Activated CD4-positive, alpha-beta T cell treated with anti-CD3 and anti-CD28 coated beads for 36 hours (primary cell): ENCODE measurements at regions of chr21 and their contacts with region 1.

Region 1: GRCh38 chr21:32727687-32728455 is at the start of gene SYNJ1:
- DNase-seq: peak; percentile 97
- ATAC-seq: peak; percentile 91
- H3K4me3 Mint-ChIP-seq: peak within 1 kb of the TSS; percentile 93
- H3K27ac Mint-ChIP-seq: peak within 1 kb of the TSS; percentile 91
- H3K4me1 Mint-ChIP-seq: peaks cover 54% of the 10 kb centered on the region
- H3K27me3 Mint-ChIP-seq: no peaks in the 10 kb centered on the region
- total RNA-seq, gene SYNJ1: 6.3 to 10.5 TPM

Region 2: DNA sequence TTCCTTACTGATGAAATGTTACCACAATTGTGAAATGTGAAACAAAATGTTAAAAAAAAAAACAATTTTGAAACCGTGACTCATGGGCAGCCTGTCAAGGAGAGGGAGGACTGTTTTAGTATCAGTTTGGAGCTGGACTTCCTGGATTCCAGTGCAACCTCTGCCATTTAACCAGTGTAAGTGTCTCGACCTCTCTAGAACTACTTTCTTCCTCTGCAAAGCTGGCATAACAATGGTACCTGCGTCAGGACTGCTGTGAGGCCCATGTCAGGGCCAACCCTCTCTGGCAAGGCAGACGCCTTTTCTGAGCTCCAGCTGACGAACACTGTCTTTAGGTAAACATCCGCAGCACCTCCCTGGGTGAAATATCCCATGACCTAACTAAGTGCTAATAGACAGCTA is 356.0 kb before region 1 on chr21:
- CTCF ChIA-PET with region 1: no interaction called
- POLR2A ChIA-PET with region 1: no interaction called
- intact Hi-C with region 1: no loop called
- DNase-seq: no peak
- ATAC-seq: peak; percentile 82
- H3K4me3 Mint-ChIP-seq: no peak overlapping the region
- H3K27ac Mint-ChIP-seq: peak overlapping the region; percentile 78
- H3K4me1 Mint-ChIP-seq: peaks cover 14% of the 10 kb centered on the region
- H3K27me3 Mint-ChIP-seq: no peaks in the 10 kb centered on the region

Region 3: GRCh38 chr21:32412162-32413014 is 315.5 kb before region 1 on chr21 and contains the start of gene EVA1C:
- CTCF ChIA-PET with region 1: no interaction called
- POLR2A ChIA-PET with region 1: no interaction called
- intact Hi-C with region 1: loop called in 1 of 2 experiments (anchors 5 kb)
- DNase-seq: peak; percentile 80
- ATAC-seq: peak; percentile 68
- H3K4me3 Mint-ChIP-seq: peak within 1 kb of the TSS; percentile 94
- H3K27ac Mint-ChIP-seq: peak within 1 kb of the TSS; percentile 97
- H3K4me1 Mint-ChIP-seq: peaks cover 28% of the 10 kb centered on the region
- H3K27me3 Mint-ChIP-seq: no peaks in the 10 kb centered on the region
- total RNA-seq, gene EVA1C: 9.3 to 10.4 TPM

Region 4: DNA sequence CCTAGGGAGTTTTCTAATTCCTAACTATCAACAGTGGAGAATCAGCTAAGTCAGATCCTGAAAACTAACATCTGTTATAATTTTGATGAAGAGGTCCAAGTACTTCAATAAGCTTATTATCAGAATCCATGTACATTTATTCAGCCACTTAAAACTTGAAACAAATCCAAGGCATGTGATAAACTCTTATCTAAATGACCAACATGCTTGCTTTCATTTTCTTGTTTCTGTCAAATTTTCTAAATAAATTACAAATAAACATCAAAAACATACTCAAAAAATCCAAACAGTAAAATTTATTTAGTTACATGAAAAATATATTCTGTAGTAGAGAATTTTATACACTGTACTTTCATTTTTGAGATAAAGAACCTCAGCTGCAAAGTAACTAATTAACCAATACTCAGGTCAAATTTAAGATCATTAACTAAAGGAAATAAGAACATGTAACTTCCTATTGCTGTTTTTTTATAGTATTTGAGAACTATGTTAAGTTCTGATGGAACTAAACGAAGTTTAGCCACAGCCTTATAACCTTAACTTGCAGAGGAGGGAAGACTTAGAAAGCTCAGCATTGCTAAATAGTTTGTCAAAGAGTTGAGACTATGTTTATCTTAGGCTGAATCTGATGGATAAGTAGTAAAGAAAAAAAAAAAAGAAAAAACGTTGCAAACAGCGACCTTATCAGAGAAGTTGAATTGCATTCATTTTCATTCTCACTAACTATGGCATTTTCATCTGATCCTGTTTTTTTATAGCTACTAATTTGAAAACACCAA is 45.0 kb before region 1 on chr21:
- CTCF ChIA-PET with region 1: no interaction called
- POLR2A ChIA-PET with region 1: no interaction called
- intact Hi-C with region 1: no loop called
- DNase-seq: no peak
- ATAC-seq: no peak
- H3K4me3 Mint-ChIP-seq: no peak overlapping the region
- H3K27ac Mint-ChIP-seq: no peak overlapping the region
- H3K4me1 Mint-ChIP-seq: no peaks in the 10 kb centered on the region
- H3K27me3 Mint-ChIP-seq: no peaks in the 10 kb centered on the region

Region 5: DNA sequence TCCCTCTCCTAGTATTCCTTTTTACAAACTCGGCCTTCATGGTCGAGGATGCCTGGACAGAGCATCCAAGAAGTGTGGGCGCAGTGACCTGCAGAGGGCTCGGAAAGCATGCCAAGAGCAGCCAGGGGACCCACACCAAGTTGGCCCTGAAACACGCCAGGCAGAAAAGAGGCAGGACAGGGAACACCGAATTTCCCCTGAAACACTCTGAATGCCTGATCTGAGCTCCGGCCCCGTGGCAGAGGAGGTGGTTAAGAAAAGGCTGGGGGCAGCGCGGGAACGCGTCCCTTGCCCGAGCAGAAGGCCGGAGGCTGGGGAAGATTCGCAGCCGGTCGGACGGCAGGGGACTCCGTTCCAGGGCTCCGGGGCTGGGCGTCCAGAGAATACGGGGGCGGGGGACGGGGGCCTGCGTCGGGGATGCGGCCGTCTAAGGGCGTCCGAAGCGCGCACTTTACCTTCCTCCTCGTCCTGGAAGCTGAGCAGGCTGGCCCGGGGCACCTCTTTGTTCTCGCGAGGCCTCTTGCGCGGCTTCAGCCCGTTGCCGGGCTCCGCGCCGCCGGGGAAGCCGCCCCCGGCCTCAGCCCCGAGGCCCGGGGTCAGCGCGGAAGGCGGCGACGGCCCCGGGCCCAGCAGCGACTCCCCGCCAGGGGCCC is 43.1 kb after region 1 on chr21:
- CTCF ChIA-PET with region 1: interaction called, 12 read pairs
- POLR2A ChIA-PET with region 1: interaction called, 8 read pairs
- intact Hi-C with region 1: loop called (anchors 1 to 10 kb)
- DNase-seq: peak; percentile 76
- ATAC-seq: peak; percentile 17
- H3K4me3 Mint-ChIP-seq: peak overlapping the region; percentile 99
- H3K27ac Mint-ChIP-seq: peak overlapping the region; percentile 96
- H3K4me1 Mint-ChIP-seq: peaks cover 54% of the 10 kb centered on the region
- H3K27me3 Mint-ChIP-seq: no peaks in the 10 kb centered on the region

Region 6: GRCh38 chr21:33479679-33480480 is 752.0 kb after region 1 on chr21 and contains the start of gene TMEM50B:
- CTCF ChIA-PET with region 1: no interaction called
- POLR2A ChIA-PET with region 1: no interaction called
- intact Hi-C with region 1: loop called in 1 of 2 experiments (anchors 5 kb)
- DNase-seq: peak; percentile 99
- ATAC-seq: peak; percentile 97
- H3K4me3 Mint-ChIP-seq: peak within 1 kb of the TSS; percentile 83
- H3K27ac Mint-ChIP-seq: peak within 1 kb of the TSS; percentile 88
- H3K4me1 Mint-ChIP-seq: peaks cover 17% of the 10 kb centered on the region
- H3K27me3 Mint-ChIP-seq: no peaks in the 10 kb centered on the region
- total RNA-seq, gene TMEM50B: 13.6 to 15.2 TPM